Calu3 (cell line): ENCODE measurements at regions of chr3 and their contacts with region 1.

Region 1: GRCh38 chr3:150703299-150704134 is at the start of gene ERICH6:
- DNase-seq: peak; percentile 98
- H3K4me3 Mint-ChIP-seq: peak within 1 kb of the TSS; percentile 81
- H3K27ac Mint-ChIP-seq: peak within 1 kb of the TSS; percentile 96
- H3K4me1 Mint-ChIP-seq: peaks cover 10% of the 10 kb centered on the region
- H3K27me3 Mint-ChIP-seq: no peaks in the 10 kb centered on the region
- CTCF ChIP-seq: peak; percentile 23
- total RNA-seq, gene ERICH6: 0.29 TPM in 1 of 2 replicates, not detected in the other

Region 2: DNA sequence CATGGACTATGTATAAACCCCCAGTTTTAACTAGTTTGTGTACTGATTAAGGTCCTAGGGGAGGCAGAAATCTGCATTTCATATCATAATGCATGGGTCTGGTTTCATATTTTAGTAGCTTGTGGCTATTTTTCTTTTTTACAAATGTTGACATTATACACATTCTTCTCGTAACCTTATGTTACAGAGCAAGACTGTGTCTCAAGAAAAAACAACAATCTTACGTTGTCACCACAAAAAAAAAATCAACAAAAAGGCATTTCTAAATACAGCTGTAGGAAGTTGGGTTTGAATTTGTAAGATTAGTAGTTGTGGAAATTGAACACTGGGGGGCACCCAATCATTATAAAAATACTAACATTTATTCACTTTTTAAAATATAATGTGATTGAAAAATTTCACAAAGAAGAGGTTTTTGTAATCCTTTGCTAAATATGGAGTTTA is 175.1 kb before region 1 on chr3:
- CTCF ChIA-PET with region 1: no interaction called
- intact Hi-C with region 1: loop called (anchors 5 kb)
- DNase-seq: no peak
- H3K4me3 Mint-ChIP-seq: no peak overlapping the region
- H3K27ac Mint-ChIP-seq: no peak overlapping the region
- H3K4me1 Mint-ChIP-seq: no peaks in the 10 kb centered on the region
- H3K27me3 Mint-ChIP-seq: no peaks in the 10 kb centered on the region
- CTCF ChIP-seq: peak; percentile 39

Region 3: GRCh38 chr3:150603153-150603979 is 100.2 kb before region 1 on chr3 and contains the start of gene SELENOT:
- CTCF ChIA-PET with region 1: no interaction called
- intact Hi-C with region 1: loop called (anchors 5 kb)
- DNase-seq: peak; percentile 98
- H3K4me3 Mint-ChIP-seq: peak within 1 kb of the TSS; percentile 97
- H3K27ac Mint-ChIP-seq: peak within 1 kb of the TSS; percentile 98
- H3K4me1 Mint-ChIP-seq: peaks cover 67% of the 10 kb centered on the region
- H3K27me3 Mint-ChIP-seq: no peaks in the 10 kb centered on the region
- CTCF ChIP-seq: peak; percentile 31
- total RNA-seq, gene SELENOT: 200 and 210 TPM in 2 replicates